Left lung (tissue), 14 donors: ENCODE measurements at regions of chr10 and their contacts with region 1.

Region 1: DNA sequence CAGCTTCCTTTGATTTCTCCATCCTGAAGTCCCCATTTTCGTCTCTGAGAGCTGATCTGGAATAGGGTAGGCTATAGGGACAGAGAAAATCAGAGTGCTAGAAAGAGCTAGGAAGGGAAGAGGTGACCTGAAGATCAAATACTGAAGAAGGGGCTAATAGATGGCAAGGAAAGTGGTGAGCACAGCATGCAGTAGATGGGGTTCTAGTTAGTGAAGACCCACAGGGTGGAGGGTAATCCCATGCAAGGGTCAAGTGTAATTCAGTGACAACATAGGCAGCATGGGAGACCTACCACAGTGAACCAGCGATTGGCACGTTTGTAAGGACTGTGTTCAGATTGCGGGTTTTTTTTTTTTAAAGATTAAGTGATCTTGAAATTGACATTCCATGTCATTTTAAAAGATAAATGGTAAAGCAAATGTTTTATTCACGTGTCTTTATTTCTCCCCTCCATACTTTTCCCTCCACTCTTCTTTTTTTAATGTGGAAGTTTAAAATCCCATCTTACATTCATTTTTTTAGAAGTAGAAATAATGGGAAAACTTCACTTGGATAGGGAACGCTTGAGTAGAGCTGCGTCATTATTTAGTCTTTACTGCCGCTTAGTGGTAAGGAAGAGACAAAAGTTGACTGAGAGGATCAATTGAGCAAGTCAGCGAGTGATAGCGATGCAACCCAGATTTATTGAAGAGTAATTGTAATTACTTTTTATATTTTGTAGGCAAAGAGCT is 21.0 kb upstream of the ABI1 start:
- DNase-seq: peak in 1 of 4 donors; percentile 69
- ATAC-seq: peak; percentile 87
- H3K4me3 ChIP-seq: no peak overlapping the region
- H3K27ac ChIP-seq: no peak overlapping the region
- H3K4me1 ChIP-seq: peaks cover 2 to 5% of the 10 kb centered on the region in 2 donors
- H3K27me3 ChIP-seq: peaks cover 0 to 30% of the 10 kb centered on the region in 2 donors
- CTCF ChIP-seq: peak; percentile 63

Region 2: DNA sequence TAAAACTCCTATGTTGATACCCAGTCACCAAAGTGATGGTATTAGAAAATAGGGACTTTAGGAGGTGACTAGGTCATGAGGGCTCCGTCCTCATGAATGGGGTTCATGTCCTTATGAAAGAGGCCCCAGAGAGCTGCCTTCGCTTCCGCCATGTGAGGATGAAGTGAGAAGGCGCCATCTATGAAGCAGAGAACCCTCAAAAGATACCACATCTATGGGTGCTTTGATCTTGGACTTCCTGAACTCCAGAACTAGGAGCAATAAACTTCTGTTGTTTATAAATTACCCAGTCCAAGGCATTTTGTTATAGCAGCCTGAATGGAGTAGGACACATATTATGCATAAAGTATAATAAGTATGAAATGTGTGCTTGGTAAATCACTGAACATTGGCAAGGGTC is 192.4 kb before region 1 on chr10:
- intact Hi-C with region 1: loop called in 1 of 2 experiments (anchors 5 kb)
- DNase-seq: no peak
- ATAC-seq: no peak
- H3K4me3 ChIP-seq: no peak overlapping the region
- H3K27ac ChIP-seq: peak overlapping the region in 1 of 2 donors; percentile 82
- H3K4me1 ChIP-seq: peaks cover 0 to 4% of the 10 kb centered on the region in 2 donors
- H3K27me3 ChIP-seq: peaks cover 0 to 13% of the 10 kb centered on the region in 2 donors
- CTCF ChIP-seq: no peak

Region 3: DNA sequence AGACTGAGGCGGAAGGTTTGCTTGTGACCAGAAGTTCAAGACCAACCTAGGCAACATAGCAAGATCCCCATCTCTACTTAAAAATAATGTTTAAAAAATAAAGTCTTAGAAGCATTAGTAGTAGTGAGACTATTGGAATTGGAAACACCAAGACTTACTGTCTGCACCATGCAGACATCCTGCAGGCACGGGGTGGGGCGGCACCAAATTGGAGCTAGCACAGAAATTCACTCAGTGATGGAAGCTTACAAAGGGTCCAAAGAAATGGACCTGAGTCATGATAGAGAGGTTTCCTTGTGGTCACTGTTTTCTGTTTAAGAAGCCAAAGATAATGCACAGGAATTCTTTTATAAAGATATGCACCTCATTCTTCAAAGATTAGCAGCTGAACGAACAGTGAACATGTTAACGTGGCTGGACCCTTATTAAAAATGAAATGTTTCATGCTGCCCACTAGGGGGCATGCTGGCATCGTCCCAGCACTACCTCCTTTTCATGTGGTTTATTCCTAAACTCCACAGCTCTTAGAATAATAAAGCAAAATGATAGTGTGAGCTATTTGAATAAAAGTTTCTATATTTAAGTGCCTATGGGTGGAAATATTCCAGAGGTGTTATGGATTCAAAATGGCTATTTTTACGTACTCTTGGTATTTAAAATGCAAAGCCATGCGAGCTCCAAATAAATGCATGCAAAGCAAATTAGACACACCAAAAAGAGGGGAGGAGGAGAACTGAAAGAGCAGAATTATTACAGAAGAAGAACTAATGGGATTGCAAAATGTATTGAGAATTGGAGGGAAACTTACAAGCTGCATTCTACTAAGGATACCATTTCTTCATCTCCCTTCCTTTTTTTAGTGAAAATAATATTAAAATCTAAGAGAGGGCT is 155.7 kb before region 1 on chr10:
- intact Hi-C with region 1: loop called in 1 of 2 experiments (anchors 5 kb)
- DNase-seq: peak in 3 of 4 donors; percentile 57 to 86 (median 59)
- ATAC-seq: peak; percentile 87
- H3K4me3 ChIP-seq: no peak overlapping the region
- H3K27ac ChIP-seq: no peak overlapping the region
- H3K4me1 ChIP-seq: no peaks in the 10 kb centered on the region
- H3K27me3 ChIP-seq: no peaks in the 10 kb centered on the region
- CTCF ChIP-seq: peak; percentile 58 to 80

Region 4: DNA sequence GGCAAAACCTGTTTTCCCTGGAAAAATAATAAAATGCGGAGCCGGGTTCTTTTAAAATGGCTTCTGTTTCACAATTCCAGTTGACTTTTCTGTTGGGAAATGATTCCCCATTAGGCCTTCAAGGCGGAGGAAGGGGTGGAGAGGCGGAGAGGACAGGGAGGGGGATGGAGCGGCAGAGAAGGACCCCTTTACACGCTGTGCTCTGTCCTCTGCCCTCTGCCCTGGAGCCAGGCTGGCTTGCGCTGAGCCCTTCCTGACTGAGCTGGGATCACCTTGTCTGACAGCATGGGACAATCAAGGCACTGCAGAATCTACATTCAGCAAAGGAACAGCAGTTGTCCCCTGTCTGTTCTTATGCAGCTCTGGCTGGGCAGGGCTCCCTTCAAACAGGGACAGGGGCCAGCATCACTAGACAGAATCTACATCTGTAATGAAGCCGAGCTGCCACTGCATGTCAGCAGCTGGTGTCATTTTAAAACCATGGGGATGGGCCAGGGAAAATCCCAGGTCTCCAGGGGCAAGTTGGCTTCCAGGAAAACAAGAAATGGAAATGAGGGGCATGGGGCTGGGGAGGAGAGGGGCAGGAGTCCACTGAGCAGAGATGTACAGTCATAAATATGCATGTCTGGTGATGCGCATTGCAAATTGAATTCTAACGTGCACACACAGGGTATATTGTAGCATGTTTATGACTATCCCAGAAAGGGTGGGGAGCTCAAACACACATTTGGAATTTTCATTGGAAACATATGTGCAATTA is 743.9 kb after region 1 on chr10:
- intact Hi-C with region 1: no loop called
- DNase-seq: no peak
- ATAC-seq: no peak
- H3K4me3 ChIP-seq: no peak overlapping the region
- H3K27ac ChIP-seq: no peak overlapping the region
- H3K4me1 ChIP-seq: no peaks in the 10 kb centered on the region
- H3K27me3 ChIP-seq: peaks cover 0 to 23% of the 10 kb centered on the region in 2 donors
- CTCF ChIP-seq: no peak